CD14-positive monocyte (primary cell): ENCODE measurements at regions of chr17 and their contacts with region 1.

Region 1: DNA sequence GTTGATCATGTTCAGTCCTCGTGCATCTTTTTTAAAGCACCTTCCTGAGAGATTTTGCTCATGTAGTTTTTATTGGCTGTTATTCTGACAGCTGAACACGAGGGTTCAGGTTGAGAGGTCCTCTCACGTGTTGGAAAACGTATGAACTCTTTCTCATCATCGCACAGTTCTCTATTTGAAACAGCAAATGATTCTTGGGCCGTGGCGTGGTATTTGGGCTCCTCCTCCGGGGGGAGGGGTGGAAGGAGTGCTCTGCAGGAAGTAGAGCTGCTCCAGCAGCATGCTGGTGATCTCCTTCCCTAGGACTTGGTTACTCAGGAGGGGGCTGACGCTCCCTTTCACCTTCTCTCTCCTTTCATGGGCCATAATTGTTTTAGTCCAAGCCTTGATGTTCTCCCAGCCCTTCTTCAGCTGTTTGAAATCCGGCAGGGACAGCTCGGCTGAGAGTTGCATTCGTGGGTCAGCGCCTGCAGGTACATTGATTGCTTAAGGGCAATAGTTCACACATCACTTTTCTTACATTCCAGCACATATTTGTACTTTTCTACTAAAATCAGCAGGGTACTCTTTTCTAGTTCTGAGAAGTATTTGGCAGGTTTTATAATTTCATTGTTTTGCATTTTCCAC is 70.5 kb downstream of the KSR1 start:
- DNase-seq: peak; percentile 73 to 79 (median 78)
- H3K4me3 ChIP-seq: peak overlapping the region in 2 of 3 experiments; percentile 7 to 44
- H3K4me3 Mint-ChIP-seq: peak overlapping the region; percentile 64 to 78
- H3K27ac ChIP-seq: peak overlapping the region; percentile 34 to 70
- H3K27ac Mint-ChIP-seq: peak overlapping the region; percentile 86 to 95 (median 91)
- H3K4me1 ChIP-seq: peaks cover 62 to 67% of the 10 kb centered on the region in 2 donors
- H3K4me1 Mint-ChIP-seq: peaks cover 88% of the 10 kb centered on the region
- H3K27me3 ChIP-seq: no peaks in the 10 kb centered on the region
- H3K27me3 Mint-ChIP-seq: peaks cover 0 to 3% (median 0%) of the 10 kb centered on the region in 3 donors
- CTCF ChIP-seq: no peak

Region 2: GRCh38 chr17:27353461-27354050 is 173.2 kb before region 1 on chr17:
- intact Hi-C with region 1: no loop called
- DNase-seq: peak; percentile 90 to 96 (median 90)
- H3K4me3 ChIP-seq: peak overlapping the region; percentile 55 to 76 (median 74)
- H3K4me3 Mint-ChIP-seq: peak overlapping the region; percentile 75 to 87
- H3K27ac ChIP-seq: peak overlapping the region; percentile 60 to 81
- H3K27ac Mint-ChIP-seq: peak overlapping the region; percentile 84 to 95 (median 89)
- H3K4me1 ChIP-seq: peaks cover 22 to 34% of the 10 kb centered on the region in 2 donors
- H3K4me1 Mint-ChIP-seq: peaks cover 30% of the 10 kb centered on the region
- H3K27me3 ChIP-seq: no peaks in the 10 kb centered on the region
- H3K27me3 Mint-ChIP-seq: peaks cover 0 to 2% (median 2%) of the 10 kb centered on the region in 3 donors
- CTCF ChIP-seq: peak; percentile 85

Region 3: DNA sequence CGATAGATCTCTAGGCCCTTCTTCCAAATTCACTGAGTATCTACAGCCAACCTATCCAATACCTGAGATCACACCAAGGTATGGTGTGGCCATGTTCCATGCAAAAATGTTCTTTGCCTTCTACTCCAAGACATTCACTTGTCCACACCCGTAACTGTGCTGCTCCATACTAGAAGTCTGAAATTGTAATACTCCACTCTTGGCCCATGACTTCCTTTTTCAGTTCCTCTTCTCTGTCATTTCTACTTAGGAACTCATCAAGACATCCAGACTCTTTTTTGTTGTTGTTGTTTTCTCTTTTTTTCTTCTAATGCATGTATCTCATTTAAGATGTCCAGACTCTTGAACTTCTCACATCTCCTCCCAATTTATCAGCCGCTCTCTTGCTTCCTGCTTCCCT is 112.9 kb before region 1 on chr17:
- intact Hi-C with region 1: loop called in 1 of 2 experiments (anchors 2 kb)
- DNase-seq: peak; percentile 53 to 79 (median 75)
- H3K4me3 ChIP-seq: peak overlapping the region in 2 of 3 experiments; percentile 8 to 62
- H3K4me3 Mint-ChIP-seq: no peak overlapping the region
- H3K27ac ChIP-seq: peak overlapping the region; percentile 26 to 70
- H3K27ac Mint-ChIP-seq: no peak overlapping the region
- H3K4me1 ChIP-seq: peaks cover 40 to 49% of the 10 kb centered on the region in 2 donors
- H3K4me1 Mint-ChIP-seq: peaks cover 4% of the 10 kb centered on the region
- H3K27me3 ChIP-seq: no peaks in the 10 kb centered on the region
- H3K27me3 Mint-ChIP-seq: peaks cover 0 to 2% (median 0%) of the 10 kb centered on the region in 3 donors
- CTCF ChIP-seq: no peak

Region 4: GRCh38 chr17:27540318-27541101 is 13.8 kb after region 1 on chr17:
- intact Hi-C with region 1: loop called in 1 of 2 experiments (anchors 2 kb)
- DNase-seq: peak; percentile 69 to 90 (median 70)
- H3K4me3 ChIP-seq: peak overlapping the region in 1 of 3 experiments; percentile 51
- H3K4me3 Mint-ChIP-seq: peak overlapping the region; percentile 63 to 88
- H3K27ac ChIP-seq: peak overlapping the region; percentile 87 to 90
- H3K27ac Mint-ChIP-seq: peak overlapping the region; percentile 91 to 97 (median 95)
- H3K4me1 ChIP-seq: peaks cover 44 to 47% of the 10 kb centered on the region in 2 donors
- H3K4me1 Mint-ChIP-seq: peaks cover 69% of the 10 kb centered on the region
- H3K27me3 ChIP-seq: no peaks in the 10 kb centered on the region
- H3K27me3 Mint-ChIP-seq: peaks cover 0 to 3% (median 0%) of the 10 kb centered on the region in 3 donors
- CTCF ChIP-seq: no peak

Region 5: DNA sequence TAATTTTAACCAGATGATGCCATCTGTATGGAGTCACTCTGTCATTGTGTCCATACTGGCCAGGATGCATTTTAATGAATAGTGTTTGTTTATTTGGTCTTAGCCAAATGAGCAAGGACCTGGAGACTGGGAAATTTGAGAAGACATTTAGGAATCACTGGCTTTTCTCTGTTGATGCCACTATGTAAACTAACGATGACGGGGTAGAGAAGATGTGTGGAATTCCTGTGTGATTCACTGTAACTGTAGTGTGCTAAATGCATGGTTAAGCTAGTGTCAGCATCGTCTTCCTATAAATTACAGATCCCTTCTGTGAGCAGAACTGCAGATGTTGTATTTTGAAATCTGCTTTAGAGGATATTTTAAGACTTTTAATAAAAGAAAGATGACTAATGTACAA is 207.1 kb after region 1 on chr17:
- intact Hi-C with region 1: no loop called
- DNase-seq: no peak
- H3K4me3 ChIP-seq: no peak overlapping the region
- H3K4me3 Mint-ChIP-seq: no peak overlapping the region
- H3K27ac ChIP-seq: no peak overlapping the region
- H3K27ac Mint-ChIP-seq: no peak overlapping the region
- H3K4me1 ChIP-seq: no peaks in the 10 kb centered on the region
- H3K4me1 Mint-ChIP-seq: no peaks in the 10 kb centered on the region
- H3K27me3 ChIP-seq: no peaks in the 10 kb centered on the region
- H3K27me3 Mint-ChIP-seq: peaks cover 3 to 25% (median 4%) of the 10 kb centered on the region in 3 donors
- CTCF ChIP-seq: no peak